ENCODE measurements at regions of chr2 and their contacts with region 1.

Region 1: GRCh38 chr2:160493227-160494028 is at the start of gene RBMS1:
- DNase-seq: peak; percentile 87
- H3K4me3 Mint-ChIP-seq: peak within 1 kb of the TSS; percentile 94
- H3K27ac Mint-ChIP-seq: peak within 1 kb of the TSS; percentile 90
- H3K4me1 Mint-ChIP-seq: peaks cover 30% of the 10 kb centered on the region
- H3K27me3 Mint-ChIP-seq: peaks cover 11% of the 10 kb centered on the region
- total RNA-seq, gene RBMS1: 34.0 and 35.2 TPM in 2 replicates

Region 2: GRCh38 chr2:160332318-160332717 is 161.1 kb before region 1 on chr2:
- intact Hi-C with region 1: loop called (anchors 5 kb)
- DNase-seq: peak; percentile 71
- H3K4me3 Mint-ChIP-seq: peak overlapping the region; percentile 33
- H3K27ac Mint-ChIP-seq: peak overlapping the region; percentile 66
- H3K4me1 Mint-ChIP-seq: peaks cover 77% of the 10 kb centered on the region
- H3K27me3 Mint-ChIP-seq: no peaks in the 10 kb centered on the region

Region 3: DNA sequence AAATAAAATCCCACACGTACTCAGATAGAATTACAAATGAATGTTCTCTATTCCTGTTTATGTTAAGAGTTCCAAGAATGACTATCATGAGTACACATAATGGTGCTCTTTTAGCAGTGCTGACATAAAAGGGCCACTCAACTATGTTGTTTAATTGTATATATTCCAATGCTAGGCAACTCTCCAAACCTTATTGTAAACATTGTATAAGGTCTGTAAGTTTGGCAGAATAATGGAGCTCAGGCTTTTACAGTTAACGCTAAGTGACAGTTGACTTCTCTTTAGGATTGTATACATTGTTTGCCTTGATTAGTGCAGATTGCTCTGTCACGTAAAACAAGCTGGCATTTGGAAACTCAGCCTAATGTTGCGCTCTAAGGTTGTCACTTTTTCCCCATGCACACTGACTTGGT is 20.6 kb before region 1 on chr2:
- intact Hi-C with region 1: loop called (anchors 1 kb)
- DNase-seq: no peak
- H3K4me3 Mint-ChIP-seq: peak overlapping the region; percentile 24
- H3K27ac Mint-ChIP-seq: peak overlapping the region; percentile 80
- H3K4me1 Mint-ChIP-seq: peaks cover 53% of the 10 kb centered on the region
- H3K27me3 Mint-ChIP-seq: no peaks in the 10 kb centered on the region

Region 4: GRCh38 chr2:160505256-160505655 is 11.8 kb after region 1 on chr2:
- intact Hi-C with region 1: loop called (anchors 1 kb)
- DNase-seq: peak; percentile 43
- H3K4me3 Mint-ChIP-seq: no peak overlapping the region
- H3K27ac Mint-ChIP-seq: no peak overlapping the region
- H3K4me1 Mint-ChIP-seq: peaks cover 12% of the 10 kb centered on the region
- H3K27me3 Mint-ChIP-seq: no peaks in the 10 kb centered on the region

Region 5: DNA sequence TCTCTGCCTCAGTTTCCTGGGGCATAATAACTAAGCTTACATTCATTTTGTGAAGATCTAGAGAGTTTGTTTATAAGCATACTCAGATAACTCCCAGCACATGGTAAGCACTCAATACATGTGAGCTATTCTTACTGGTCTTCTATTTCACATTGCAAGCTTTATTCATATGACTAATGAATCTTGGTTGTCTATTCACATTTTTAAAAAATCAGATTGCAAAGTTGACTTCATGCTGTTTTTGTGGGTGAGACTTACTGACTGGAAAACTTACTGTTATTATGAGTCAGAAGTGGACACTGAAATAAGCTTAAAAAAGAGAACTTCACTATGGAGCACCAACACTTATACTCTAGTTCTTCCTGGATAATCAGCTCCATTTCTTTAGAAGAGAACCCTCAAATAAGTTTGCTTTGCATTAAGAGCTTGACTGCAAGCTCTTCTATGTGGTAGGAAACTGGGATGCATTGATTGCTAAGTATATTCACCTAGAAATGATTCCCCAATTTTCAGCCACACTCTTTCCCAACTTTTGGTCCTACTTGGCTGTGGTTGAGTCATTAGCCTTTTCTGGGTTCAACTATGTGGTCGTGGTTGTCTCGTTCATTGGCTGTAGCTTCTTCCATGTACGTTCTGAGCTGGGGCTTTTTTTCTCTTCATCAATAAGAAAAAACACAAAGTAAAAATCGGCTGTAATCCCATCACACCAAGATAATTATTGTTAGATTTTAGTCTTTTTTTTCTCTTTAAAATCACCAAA is 29.7 kb after region 1 on chr2:
- intact Hi-C with region 1: no loop called
- DNase-seq: no peak
- H3K4me3 Mint-ChIP-seq: no peak overlapping the region
- H3K27ac Mint-ChIP-seq: no peak overlapping the region
- H3K4me1 Mint-ChIP-seq: no peaks in the 10 kb centered on the region
- H3K27me3 Mint-ChIP-seq: peaks cover 2% of the 10 kb centered on the region

Region 6: GRCh38 chr2:160652236-160652635 is 158.8 kb after region 1 on chr2:
- intact Hi-C with region 1: loop called (anchors 5 kb)
- DNase-seq: peak; percentile 89
- H3K4me3 Mint-ChIP-seq: peak overlapping the region; percentile 17
- H3K27ac Mint-ChIP-seq: peak overlapping the region; percentile 38
- H3K4me1 Mint-ChIP-seq: peaks cover 22% of the 10 kb centered on the region
- H3K27me3 Mint-ChIP-seq: peaks cover 16% of the 10 kb centered on the region

Region 7: DNA sequence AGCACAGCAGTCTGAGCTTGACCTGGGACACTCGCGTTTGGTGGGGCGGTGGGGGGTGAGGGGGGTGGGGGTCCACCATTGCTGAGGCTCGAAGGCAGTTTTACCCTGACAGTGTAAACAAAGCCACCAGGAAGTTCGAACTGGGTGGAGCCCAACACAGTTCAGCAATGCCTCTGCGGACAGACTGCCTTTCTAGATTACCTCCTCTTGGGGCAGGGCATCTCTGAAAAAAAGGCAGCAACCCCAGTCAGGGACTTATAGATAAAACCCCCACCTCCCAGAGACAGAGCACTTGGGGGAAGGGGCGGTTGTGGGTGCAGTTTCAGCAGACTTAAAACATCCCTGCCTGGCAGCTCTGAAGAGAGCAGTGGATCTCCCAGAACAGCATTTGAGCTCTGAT is 517.1 kb after region 1 on chr2:
- intact Hi-C with region 1: no loop called
- DNase-seq: no peak
- H3K4me3 Mint-ChIP-seq: no peak overlapping the region
- H3K27ac Mint-ChIP-seq: no peak overlapping the region
- H3K4me1 Mint-ChIP-seq: no peaks in the 10 kb centered on the region
- H3K27me3 Mint-ChIP-seq: peaks cover 21% of the 10 kb centered on the region

Region 8: GRCh38 chr2:161160226-161161069 is 667.0 kb after region 1 on chr2 and contains the start of gene TANK:
- intact Hi-C with region 1: loop called (anchors 10 kb)
- DNase-seq: peak; percentile 96
- H3K4me3 Mint-ChIP-seq: peak within 1 kb of the TSS; percentile 97
- H3K27ac Mint-ChIP-seq: peak within 1 kb of the TSS; percentile 98
- H3K4me1 Mint-ChIP-seq: peaks cover 55% of the 10 kb centered on the region
- H3K27me3 Mint-ChIP-seq: no peaks in the 10 kb centered on the region
- total RNA-seq, gene TANK: 91.2 and 97.2 TPM in 2 replicates

Measured in activated CD4-positive, alpha-beta T cell treated with anti-CD3 and anti-CD28 coated beads, Interleukin-2, amount 10 ng/mL, durations not matched to agents 24 days and 14 days (primary cell).